B cell (primary cell): ENCODE measurements at regions of chr1 and their contacts with region 1.

Region 1: GRCh38 chr1:84573967-84574842 is at the start of gene CTBS:
- DNase-seq: peak; percentile 93
- ATAC-seq: peak; percentile 95
- H3K4me3 ChIP-seq: peak within 1 kb of the TSS; percentile 59 to 94 (median 73)
- H3K4me3 Mint-ChIP-seq: peak within 1 kb of the TSS; percentile 100
- H3K27ac ChIP-seq: peak within 1 kb of the TSS; percentile 96 to 99
- H3K27ac Mint-ChIP-seq: peak within 1 kb of the TSS; percentile 100
- H3K4me1 ChIP-seq: peaks cover 26% of the 10 kb centered on the region in 2 donors
- H3K4me1 Mint-ChIP-seq: peaks cover 43% of the 10 kb centered on the region
- H3K27me3 ChIP-seq: no peaks in the 10 kb centered on the region
- H3K27me3 Mint-ChIP-seq: no peaks in the 10 kb centered on the region
- CTCF ChIP-seq: no peak
- total RNA-seq, gene CTBS: 19.1 and 19.9 TPM in 2 replicates

Region 2: DNA sequence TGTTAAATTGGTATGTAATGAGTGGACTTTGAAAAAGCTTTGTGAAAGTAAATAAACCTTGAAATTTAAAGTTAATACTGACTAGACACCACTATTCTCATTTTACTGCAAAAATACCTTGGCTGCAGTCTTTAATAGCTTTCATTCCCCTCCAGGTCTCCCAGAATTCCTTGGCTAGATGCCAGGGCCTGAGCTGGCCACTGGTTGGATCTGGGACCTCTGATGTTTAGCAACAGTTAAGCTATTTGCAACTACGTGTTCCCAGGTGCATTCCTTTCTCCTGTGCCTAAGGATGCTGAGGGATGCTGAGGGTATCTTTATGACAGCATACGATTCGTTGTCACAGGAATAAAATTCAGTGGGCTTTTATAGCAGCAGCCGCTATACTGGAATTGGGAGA is 1514.0 kb before region 1 on chr1:
- CTCF ChIA-PET with region 1: no interaction called
- POLR2A ChIA-PET with region 1: no interaction called
- intact Hi-C with region 1: no loop called
- DNase-seq: no peak
- ATAC-seq: no peak
- H3K4me3 ChIP-seq: no peak overlapping the region
- H3K4me3 Mint-ChIP-seq: no peak overlapping the region
- H3K27ac ChIP-seq: no peak overlapping the region
- H3K27ac Mint-ChIP-seq: no peak overlapping the region
- H3K4me1 ChIP-seq: no peaks in the 10 kb centered on the region
- H3K4me1 Mint-ChIP-seq: no peaks in the 10 kb centered on the region
- H3K27me3 ChIP-seq: no peaks in the 10 kb centered on the region
- H3K27me3 Mint-ChIP-seq: no peaks in the 10 kb centered on the region
- CTCF ChIP-seq: no peak

Region 3: GRCh38 chr1:84077476-84078107 is 496.6 kb before region 1 on chr1:
- CTCF ChIA-PET with region 1: no interaction called
- POLR2A ChIA-PET with region 1: no interaction called
- intact Hi-C with region 1: loop called (anchors 2 kb)
- DNase-seq: peak; percentile 85
- ATAC-seq: peak; percentile 93
- H3K4me3 ChIP-seq: peak overlapping the region; percentile 41 to 86 (median 68)
- H3K4me3 Mint-ChIP-seq: peak overlapping the region; percentile 84
- H3K27ac ChIP-seq: peak overlapping the region; percentile 46 to 70
- H3K27ac Mint-ChIP-seq: peak overlapping the region; percentile 67
- H3K4me1 ChIP-seq: peaks cover 7 to 12% of the 10 kb centered on the region in 2 donors
- H3K4me1 Mint-ChIP-seq: peaks cover 13% of the 10 kb centered on the region
- H3K27me3 ChIP-seq: no peaks in the 10 kb centered on the region
- H3K27me3 Mint-ChIP-seq: no peaks in the 10 kb centered on the region
- CTCF ChIP-seq: no peak

Region 4: DNA sequence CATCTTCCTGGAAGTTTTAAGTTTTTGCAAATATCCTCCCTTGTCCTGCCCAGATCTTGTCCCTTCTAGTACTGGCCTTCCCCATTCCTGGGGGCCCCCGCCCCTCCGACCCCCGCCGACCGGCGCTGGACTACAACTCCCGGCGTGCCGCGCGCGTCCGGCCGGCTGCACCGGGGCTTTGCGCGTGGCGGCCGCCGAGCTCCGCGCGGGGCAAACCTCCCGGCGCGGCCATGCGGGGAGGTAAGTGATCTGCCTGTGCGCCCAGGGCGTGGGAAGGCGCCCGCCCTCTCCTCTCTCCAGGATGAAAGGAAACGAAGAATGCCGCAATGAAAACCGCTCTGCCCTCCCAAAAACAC is 275.9 kb before region 1 on chr1:
- CTCF ChIA-PET with region 1: no interaction called
- POLR2A ChIA-PET with region 1: no interaction called
- intact Hi-C with region 1: loop called (anchors 5 kb)
- DNase-seq: no peak
- ATAC-seq: peak; percentile 87
- H3K4me3 ChIP-seq: peak overlapping the region; percentile 66 to 86 (median 84)
- H3K4me3 Mint-ChIP-seq: peak overlapping the region; percentile 94
- H3K27ac ChIP-seq: no peak overlapping the region
- H3K27ac Mint-ChIP-seq: peak overlapping the region; percentile 69
- H3K4me1 ChIP-seq: peaks cover 31 to 32% of the 10 kb centered on the region in 2 donors
- H3K4me1 Mint-ChIP-seq: peaks cover 36% of the 10 kb centered on the region
- H3K27me3 ChIP-seq: peaks cover 0 to 15% (median 9%) of the 10 kb centered on the region in 4 experiments
- H3K27me3 Mint-ChIP-seq: peaks cover 20% of the 10 kb centered on the region
- CTCF ChIP-seq: no peak

Region 5: DNA sequence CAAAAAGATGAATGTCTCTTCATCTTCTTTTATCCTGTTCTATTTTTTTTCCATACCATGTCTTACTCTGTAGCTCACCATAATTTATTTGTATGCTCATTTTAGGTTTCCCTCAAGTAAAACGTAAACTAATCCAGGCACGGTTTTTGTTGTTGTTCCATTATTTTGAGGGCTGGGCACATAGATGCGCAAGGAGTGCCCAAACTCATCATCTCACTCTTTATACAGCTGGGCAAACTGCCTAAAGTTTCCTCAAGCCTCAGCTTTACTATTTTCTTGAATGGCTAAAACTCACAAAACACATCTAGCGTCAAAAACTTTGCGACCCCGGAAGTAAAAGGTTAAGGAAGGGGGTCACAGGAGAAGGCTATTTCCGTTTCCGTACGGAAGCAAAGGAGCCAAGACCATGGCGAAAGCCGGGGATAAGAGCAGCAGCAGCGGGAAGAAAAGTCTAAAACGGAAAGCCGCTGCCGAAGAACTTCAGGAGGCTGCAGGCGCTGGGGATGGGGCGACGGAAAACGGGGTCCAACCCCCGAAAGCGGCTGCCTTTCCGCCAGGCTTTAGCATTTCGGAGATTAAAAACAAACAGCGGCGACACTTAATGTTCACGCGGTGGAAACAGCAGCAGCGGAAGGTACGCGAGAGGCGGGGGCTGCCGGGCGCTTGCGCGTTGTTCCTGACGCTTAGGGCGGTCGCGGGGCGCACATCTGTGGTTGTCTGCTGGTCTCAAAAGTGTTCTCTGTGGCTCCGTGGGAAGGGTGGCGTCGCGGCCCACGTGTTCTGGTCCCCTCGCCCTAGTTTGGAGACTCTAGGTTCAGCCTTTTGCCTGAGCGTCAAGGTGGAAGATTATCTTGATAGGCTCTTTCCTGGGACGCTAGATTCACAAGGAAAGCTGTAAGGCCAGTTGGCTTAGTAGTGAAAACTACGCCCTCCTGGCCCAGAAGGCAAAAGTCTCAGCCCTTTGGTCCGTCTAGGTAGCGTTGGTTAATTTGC is 95.0 kb before region 1 on chr1 and contains the start of gene RPF1:
- CTCF ChIA-PET with region 1: interaction called, 3 read pairs
- POLR2A ChIA-PET with region 1: interaction called, 4 read pairs
- intact Hi-C with region 1: loop called (anchors 1 kb)
- DNase-seq: peak; percentile 88
- ATAC-seq: peak; percentile 95
- H3K4me3 ChIP-seq: peak within 1 kb of the TSS; percentile 66 to 90 (median 88)
- H3K4me3 Mint-ChIP-seq: peak within 1 kb of the TSS; percentile 94
- H3K27ac ChIP-seq: peak within 1 kb of the TSS; percentile 78 to 81
- H3K27ac Mint-ChIP-seq: peak within 1 kb of the TSS; percentile 91
- H3K4me1 ChIP-seq: peaks cover 19 to 32% of the 10 kb centered on the region in 2 donors
- H3K4me1 Mint-ChIP-seq: peaks cover 40% of the 10 kb centered on the region
- H3K27me3 ChIP-seq: peaks cover 0 to 24% (median 14%) of the 10 kb centered on the region in 4 experiments
- H3K27me3 Mint-ChIP-seq: peaks cover 30% of the 10 kb centered on the region
- CTCF ChIP-seq: no peak
- total RNA-seq, gene RPF1: 38.8 and 40.2 TPM in 2 replicates

Region 6: DNA sequence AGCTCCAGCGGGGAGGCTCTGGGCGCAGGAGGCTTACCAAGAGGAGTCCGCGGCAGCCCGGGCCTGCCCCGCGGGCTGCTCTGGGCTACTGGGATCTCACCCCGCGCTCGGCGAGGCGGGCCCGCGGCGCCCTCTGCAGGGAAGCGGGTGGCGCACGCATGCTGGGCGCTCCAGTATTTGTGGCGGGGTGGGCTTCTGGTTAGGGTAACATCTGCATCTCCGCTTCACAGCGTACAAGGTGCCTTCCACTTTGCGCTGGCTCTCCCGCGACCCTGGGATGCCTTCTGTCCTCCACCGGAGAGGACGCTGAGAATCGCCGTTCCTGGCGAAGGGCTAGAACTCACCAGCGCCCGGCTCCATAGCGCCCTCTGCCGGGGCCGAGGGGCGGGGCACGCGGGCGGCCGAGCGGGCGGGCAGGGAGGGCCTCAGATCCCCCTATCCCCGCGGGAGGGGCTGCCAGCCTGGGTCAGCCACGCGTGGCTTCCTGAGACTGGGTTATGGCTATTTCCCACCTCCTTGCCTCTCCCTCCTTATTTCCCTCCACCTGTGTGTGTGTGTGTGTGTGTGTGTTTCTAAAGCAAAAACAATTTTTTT is 46.6 kb after region 1 on chr1:
- CTCF ChIA-PET with region 1: interaction called, 3 read pairs
- POLR2A ChIA-PET with region 1: no interaction called
- intact Hi-C with region 1: loop called (anchors 1 kb)
- DNase-seq: peak; percentile 90
- ATAC-seq: peak; percentile 92
- H3K4me3 ChIP-seq: peak overlapping the region in 4 of 5 experiments; percentile 59 to 84 (median 72)
- H3K4me3 Mint-ChIP-seq: peak overlapping the region; percentile 96
- H3K27ac ChIP-seq: no peak overlapping the region
- H3K27ac Mint-ChIP-seq: peak overlapping the region; percentile 69
- H3K4me1 ChIP-seq: peaks cover 0 to 4% of the 10 kb centered on the region in 2 donors
- H3K4me1 Mint-ChIP-seq: peaks cover 6% of the 10 kb centered on the region
- H3K27me3 ChIP-seq: peaks cover 0 to 5% (median 0%) of the 10 kb centered on the region in 4 experiments
- H3K27me3 Mint-ChIP-seq: peaks cover 6% of the 10 kb centered on the region
- CTCF ChIP-seq: peak; percentile 100

Region 7: DNA sequence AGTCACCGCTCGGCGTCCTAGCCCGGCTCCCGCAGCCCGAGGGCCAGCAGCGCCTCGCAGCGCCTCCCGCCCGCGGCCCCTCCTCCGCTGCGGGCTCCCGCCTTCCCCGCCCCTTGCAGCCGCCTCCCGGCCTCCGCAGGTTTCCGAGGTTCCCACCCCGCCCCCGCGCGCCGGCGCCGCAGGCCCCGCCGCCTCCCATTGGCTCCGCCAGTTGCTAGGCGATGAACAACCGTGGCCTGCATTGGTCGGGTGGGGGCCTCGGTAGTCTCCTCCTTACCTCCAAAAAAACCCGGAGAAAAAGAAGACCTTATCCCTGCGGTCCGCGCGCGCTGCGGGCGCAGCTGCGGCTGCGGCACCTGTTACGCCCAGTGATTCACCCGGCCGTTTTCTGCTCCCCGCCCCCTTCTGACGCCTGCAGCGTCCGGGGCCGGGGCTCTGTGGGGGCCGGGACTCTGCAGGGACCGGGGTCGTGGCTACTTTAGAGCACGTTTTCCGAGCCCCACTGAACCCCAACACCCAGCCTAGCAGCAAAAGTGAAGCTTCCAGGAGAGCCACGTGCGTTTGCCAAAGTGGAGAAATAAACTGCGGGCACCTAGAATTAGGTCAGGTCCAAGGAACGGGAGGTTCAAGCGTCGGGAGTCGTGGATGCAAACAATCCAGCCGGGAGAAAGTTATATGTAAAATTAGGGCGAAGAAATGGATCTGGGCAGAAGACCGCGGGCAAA is 116.4 kb after region 1 on chr1 and contains the start of gene SSX2IP:
- CTCF ChIA-PET with region 1: interaction called, 3 read pairs
- POLR2A ChIA-PET with region 1: no interaction called
- intact Hi-C with region 1: loop called (anchors 1 kb)
- DNase-seq: peak; percentile 97
- ATAC-seq: peak; percentile 86
- H3K4me3 ChIP-seq: peak within 1 kb of the TSS; percentile 71 to 93 (median 85)
- H3K4me3 Mint-ChIP-seq: peak within 1 kb of the TSS; percentile 80
- H3K27ac ChIP-seq: peak within 1 kb of the TSS; percentile 56 to 64
- H3K27ac Mint-ChIP-seq: peak within 1 kb of the TSS; percentile 62
- H3K4me1 ChIP-seq: peaks cover 12 to 24% of the 10 kb centered on the region in 2 donors
- H3K4me1 Mint-ChIP-seq: peaks cover 27% of the 10 kb centered on the region
- H3K27me3 ChIP-seq: no peaks in the 10 kb centered on the region
- H3K27me3 Mint-ChIP-seq: no peaks in the 10 kb centered on the region
- CTCF ChIP-seq: no peak
- total RNA-seq, gene SSX2IP: 7.1 and 10.3 TPM in 2 replicates